Aorta (tissue), 5 donors: ENCODE measurements at regions of chr1 and their contacts with region 1.

Region 1: DNA sequence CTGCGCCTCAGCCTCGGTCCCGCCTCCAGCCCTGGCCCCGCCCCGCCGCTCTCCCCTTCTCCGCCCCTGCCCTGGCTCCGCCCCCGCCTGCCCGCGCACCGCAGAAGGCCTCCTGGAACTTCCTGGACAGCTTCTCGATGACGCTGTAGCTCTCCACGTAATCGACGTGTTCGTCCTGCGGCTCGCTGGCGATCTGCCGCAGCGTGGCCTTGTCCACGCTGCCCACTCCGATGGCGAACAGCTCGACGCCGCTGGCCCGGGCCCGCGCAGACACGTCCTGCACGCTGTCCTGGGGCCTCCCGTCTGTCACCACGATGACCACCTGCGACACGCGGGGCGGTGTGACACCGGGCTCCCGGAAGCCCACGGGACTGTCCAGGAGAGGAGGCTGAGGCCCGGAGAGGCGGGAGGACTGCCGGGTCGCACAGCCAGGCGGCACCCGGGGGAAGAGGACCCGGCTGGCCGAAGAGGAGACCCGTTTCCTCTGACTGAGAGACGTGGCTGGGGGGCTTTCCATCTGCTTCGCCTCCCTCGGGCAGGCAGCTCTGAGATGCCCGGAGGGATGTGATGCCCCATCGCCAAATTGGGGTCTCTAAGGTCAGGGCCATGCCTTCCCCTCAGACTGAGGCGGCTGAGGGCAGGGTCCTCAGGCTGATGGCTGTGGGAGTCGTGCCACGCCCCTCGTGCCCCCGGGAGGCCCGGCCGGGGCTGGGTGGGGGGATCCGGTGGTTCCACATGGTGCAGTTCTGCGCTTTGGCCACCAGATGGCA is 4.6 kb downstream of the MATN1 start:
- DNase-seq: peak; percentile 95 to 99
- ATAC-seq: peak; percentile 93
- H3K4me3 ChIP-seq: peak overlapping the region in 1 of 2 donors; percentile 4
- H3K27ac ChIP-seq: peak overlapping the region; percentile 62 to 89
- H3K4me1 ChIP-seq: no peaks in the 10 kb centered on the region
- H3K27me3 ChIP-seq: no peaks in the 10 kb centered on the region

Region 2: DNA sequence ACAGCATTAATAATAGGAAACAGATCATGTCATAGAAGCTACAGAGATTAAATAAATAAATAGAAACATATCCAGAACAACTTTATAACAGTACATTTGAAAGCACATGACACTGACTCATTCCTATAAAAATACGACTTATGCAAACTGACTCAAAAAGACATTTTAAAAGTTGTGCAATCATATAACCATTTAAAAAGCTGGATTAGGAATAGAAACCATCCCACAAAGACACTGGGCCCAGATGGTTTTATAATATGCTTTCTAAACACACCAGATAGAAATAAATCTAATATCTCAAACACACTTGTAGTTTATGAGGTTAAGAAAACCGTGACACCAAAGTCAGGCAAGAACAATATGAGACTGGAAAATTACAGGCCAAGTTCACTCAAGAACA is 43.1 kb before region 1 on chr1:
- intact Hi-C with region 1: no loop called
- DNase-seq: no peak
- ATAC-seq: peak; percentile 33
- H3K4me3 ChIP-seq: no peak overlapping the region
- H3K27ac ChIP-seq: no peak overlapping the region
- H3K4me1 ChIP-seq: no peaks in the 10 kb centered on the region
- H3K27me3 ChIP-seq: no peaks in the 10 kb centered on the region

Region 3: DNA sequence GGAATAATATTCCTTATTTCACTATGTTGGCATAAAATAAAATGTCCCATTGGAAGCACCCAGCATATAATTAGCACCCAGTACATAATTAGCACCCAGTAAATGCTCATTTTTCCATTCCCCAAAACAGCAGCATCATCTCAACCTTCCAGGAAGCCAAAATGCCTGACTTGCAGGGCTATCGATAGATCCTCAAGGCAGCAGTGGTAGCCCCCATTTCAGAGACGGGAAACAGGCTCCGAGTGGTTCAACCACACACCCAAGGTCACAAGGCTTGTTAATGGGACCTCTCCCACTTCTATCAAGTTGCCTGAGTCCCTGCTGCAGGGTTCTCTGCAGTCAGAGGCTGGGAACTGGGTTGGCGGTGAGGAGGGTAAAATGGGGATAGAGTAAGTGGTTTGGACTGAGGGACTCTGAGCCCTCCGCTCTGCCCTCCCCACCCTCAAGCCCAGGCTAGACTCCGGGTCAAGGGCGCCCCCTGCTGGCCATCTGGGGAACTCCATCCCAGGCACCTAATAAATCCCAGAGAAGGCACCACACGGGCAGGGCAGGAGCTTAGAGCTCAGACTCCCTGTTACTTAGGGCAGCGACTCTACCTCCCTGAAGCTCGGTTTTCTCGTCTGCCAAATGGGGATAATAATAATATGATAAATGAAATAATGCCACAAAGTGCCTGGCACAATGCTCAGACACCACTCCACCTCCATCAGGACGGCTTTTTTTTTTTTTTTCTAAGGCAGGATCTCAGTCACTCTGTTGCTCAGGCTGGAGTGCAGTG is 60.7 kb after region 1 on chr1:
- intact Hi-C with region 1: loop called (anchors 1 kb)
- DNase-seq: peak; percentile 88 to 97
- ATAC-seq: peak; percentile 80
- H3K4me3 ChIP-seq: no peak overlapping the region
- H3K27ac ChIP-seq: no peak overlapping the region
- H3K4me1 ChIP-seq: no peaks in the 10 kb centered on the region
- H3K27me3 ChIP-seq: no peaks in the 10 kb centered on the region

Region 4: DNA sequence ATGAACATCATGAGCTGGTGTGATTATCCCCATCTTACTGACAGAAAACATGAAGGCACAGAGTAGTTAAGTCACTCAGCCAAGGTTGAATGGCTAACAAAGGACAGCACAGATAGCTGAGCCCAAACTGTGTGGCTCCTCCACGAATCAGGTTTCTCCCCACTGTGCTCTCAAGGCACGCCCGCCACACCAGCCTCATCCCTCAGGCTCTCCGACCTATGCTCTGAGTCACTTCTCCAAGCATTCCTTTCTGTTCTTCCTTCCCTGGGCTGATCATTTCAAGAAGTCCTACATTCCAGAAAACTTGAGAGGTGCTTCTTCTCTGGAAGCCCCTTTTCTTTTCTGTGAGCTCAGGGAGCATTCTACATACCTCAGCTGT is 215.0 kb after region 1 on chr1:
- intact Hi-C with region 1: loop called in 1 of 2 experiments (anchors 5 kb)
- DNase-seq: no peak
- ATAC-seq: no peak
- H3K4me3 ChIP-seq: no peak overlapping the region
- H3K27ac ChIP-seq: no peak overlapping the region
- H3K4me1 ChIP-seq: no peaks in the 10 kb centered on the region
- H3K27me3 ChIP-seq: no peaks in the 10 kb centered on the region